ENCODE measurements at regions of chr21 and their contacts with region 1.

Region 1: GRCh38 chr21:41283211-41283818 is 33.3 kb upstream of the FAM3B start:
- DNase-seq: peak in 1 of 2 donors; percentile 71
- H3K4me3 ChIP-seq: no peak overlapping the region
- CTCF ChIP-seq: peak in 1 of 3 donors; percentile 35
- POLR2A ChIP-seq: no peak

Region 2: DNA sequence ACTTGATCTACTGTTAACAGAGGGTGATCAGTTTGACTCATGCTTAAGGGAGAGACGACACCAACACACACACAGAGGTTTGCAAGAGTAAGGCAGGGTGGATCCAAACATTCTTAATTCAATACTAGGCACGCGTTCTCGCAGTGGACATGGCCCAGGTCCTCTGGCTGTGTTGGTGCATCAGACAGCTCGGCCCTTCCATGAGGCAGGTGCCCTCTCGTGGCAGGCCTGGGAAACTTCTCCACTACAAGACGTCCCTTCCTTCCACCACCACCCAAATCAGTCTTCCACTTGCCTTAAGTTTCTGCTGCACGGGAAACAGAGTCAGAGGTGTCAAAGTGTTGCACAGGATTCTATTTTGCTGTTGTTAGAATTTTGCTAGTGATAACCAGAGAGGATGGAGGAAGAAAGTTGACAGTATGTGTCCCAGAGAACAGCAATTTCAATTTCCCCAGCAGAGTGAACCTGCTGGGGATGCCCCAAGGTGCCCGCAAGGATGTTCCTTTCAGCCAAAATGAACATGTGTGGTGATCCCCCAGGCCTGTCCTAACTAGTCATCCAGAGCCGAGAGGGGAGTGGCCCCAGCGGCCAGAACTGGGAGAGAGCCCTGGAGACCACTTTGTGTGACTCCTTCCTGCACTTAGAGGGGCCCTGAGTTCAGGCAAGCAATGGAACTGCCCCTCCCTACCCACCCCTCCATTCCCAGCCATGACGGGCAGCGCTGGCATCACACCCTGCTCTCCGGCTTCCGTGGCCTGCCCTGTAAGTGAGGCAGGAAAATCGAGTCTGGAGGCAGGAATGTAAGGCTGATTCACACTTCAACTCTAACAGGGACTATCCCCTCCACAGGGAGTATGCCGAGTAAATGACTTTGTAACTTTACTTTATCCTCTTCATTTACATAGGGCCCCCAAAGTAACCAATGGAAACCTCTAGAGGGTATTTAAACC is 177.5 kb after region 1 on chr21:
- intact Hi-C with region 1: loop called (anchors 5 kb)
- DNase-seq: peak; percentile 76 to 94
- H3K4me3 ChIP-seq: no peak overlapping the region
- CTCF ChIP-seq: peak in 1 of 3 donors; percentile 83
- POLR2A ChIP-seq: no peak

Measured in lower leg skin (tissue), 4 donors.